GM13976 (cell line): ENCODE measurements at regions of chr10 and their contacts with region 1.

Region 1: DNA sequence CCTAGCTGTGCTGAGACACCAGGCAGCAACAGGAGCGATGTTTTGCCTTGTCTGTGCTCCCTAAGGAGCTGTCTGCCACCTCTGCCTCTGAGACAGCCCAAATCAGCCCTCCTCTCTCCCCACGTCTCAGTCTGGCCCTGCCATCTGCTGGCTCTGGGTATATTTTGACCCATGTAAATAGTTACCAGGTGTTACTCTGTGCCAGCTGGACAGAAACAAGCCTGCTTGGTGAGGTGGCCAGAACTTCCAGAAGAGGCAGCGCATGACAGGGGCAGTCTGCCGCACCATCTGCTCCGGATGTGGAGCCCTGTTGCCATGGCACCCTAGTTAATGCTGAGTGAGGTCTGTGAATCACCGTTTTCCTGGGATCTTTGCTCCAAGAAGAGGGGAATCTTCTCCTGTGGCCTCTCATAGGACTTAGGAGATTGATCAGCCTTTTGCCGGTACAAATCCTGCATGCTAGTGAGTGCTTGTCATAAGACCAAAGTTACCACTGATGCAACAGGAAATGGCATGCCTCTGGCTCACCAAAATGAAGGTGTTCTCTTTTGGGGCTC is 31.8 kb downstream of the GSTO2 start:
- DNase-seq: no peak
- CTCF ChIP-seq: no peak

Region 2: GRCh38 chr10:104121520-104122224 is 179.1 kb before region 1 on chr10 and contains the start of gene SFR1:
- in situ Hi-C with region 1: no loop called
- DNase-seq: peak; percentile 95
- CTCF ChIP-seq: peak; percentile 82

Region 3: GRCh38 chr10:104349623-104350126 is 48.9 kb after region 1 on chr10:
- in situ Hi-C with region 1: loop called (anchors 5 kb)
- DNase-seq: peak; percentile 33
- CTCF ChIP-seq: no peak

Region 4: GRCh38 chr10:104735036-104735761 is 434.4 kb after region 1 on chr10:
- in situ Hi-C with region 1: no loop called
- DNase-seq: no peak
- CTCF ChIP-seq: no peak